Naive thymus-derived CD4-positive, alpha-beta T cell (primary cell): ENCODE measurements at regions of chr2 and their contacts with region 1.

Region 1: GRCh38 chr2:28413142-28413898 is 20.7 kb downstream of the FOSL2 start:
- DNase-seq: no peak
- ATAC-seq: no peak
- H3K4me3 ChIP-seq: no peak overlapping the region
- H3K4me3 Mint-ChIP-seq: no peak overlapping the region
- H3K27ac ChIP-seq: no peak overlapping the region
- H3K27ac Mint-ChIP-seq: peak overlapping the region in 8 of 9 donors; percentile 43 to 96 (median 76)
- H3K4me1 ChIP-seq: peaks cover 28 to 35% of the 10 kb centered on the region in 2 donors
- H3K4me1 Mint-ChIP-seq: peaks cover 23 to 48% (median 39%) of the 10 kb centered on the region in 7 donors
- H3K27me3 ChIP-seq: no peaks in the 10 kb centered on the region
- H3K27me3 Mint-ChIP-seq: no peaks in the 10 kb centered on the region

Region 2: DNA sequence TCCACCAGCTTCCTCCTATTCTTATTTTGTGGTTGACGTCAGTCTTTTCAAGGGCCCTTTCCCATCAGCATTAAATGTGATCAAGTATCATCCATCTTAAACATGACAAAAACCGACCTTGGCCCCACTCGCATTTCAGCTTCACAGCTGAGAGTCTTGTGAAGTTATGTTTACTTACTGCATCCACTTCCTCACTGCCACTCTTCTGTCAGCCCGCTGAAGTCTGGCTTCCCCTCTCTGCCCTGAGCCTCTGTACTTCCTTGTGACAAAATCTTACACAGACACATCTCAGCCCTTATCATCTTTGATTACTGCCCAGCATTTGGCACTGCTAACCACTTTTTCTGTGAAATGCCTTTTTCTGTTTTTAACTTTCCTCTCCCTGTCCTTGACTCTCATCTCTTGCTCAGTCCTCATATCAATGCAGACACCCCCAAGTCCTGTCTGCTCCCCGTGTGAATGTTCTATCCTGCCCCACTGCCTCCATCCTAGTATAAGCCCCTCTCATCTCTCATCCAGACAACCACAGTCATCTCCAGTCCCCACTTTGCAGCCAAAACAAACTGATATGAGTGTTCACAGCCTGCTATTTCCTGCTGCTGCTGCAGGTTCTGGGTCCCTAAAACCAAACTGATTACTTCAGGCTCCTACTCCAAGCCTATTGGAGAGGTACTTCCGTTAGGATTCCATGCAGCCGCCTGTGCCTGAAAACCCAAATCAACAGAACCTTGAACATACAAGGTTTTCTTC is 10.7 kb after region 1 on chr2:
- CTCF ChIA-PET with region 1: interaction called, 4 read pairs
- POLR2A ChIA-PET with region 1: interaction called, 13 read pairs
- intact Hi-C with region 1: loop called (anchors 1 kb)
- DNase-seq: peak in 7 of 9 donors; percentile 33 to 70 (median 57)
- ATAC-seq: peak; percentile 90
- H3K4me3 ChIP-seq: peak overlapping the region; percentile 21
- H3K4me3 Mint-ChIP-seq: peak overlapping the region; percentile 62 to 84 (median 74)
- H3K27ac ChIP-seq: peak overlapping the region; percentile 66
- H3K27ac Mint-ChIP-seq: peak overlapping the region; percentile 88 to 99 (median 97)
- H3K4me1 ChIP-seq: peaks cover 24 to 30% of the 10 kb centered on the region in 2 donors
- H3K4me1 Mint-ChIP-seq: peaks cover 33 to 53% (median 45%) of the 10 kb centered on the region in 7 donors
- H3K27me3 ChIP-seq: no peaks in the 10 kb centered on the region
- H3K27me3 Mint-ChIP-seq: no peaks in the 10 kb centered on the region

Region 3: GRCh38 chr2:28729698-28730097 is 316.4 kb after region 1 on chr2:
- CTCF ChIA-PET with region 1: no interaction called
- POLR2A ChIA-PET with region 1: no interaction called
- intact Hi-C with region 1: no loop called
- DNase-seq: no peak
- ATAC-seq: no peak
- H3K4me3 ChIP-seq: no peak overlapping the region
- H3K4me3 Mint-ChIP-seq: no peak overlapping the region
- H3K27ac ChIP-seq: no peak overlapping the region
- H3K27ac Mint-ChIP-seq: peak overlapping the region in 5 of 9 donors; percentile 5 to 46 (median 26)
- H3K4me1 ChIP-seq: no peaks in the 10 kb centered on the region
- H3K4me1 Mint-ChIP-seq: peaks cover 5 to 17% (median 8%) of the 10 kb centered on the region in 7 donors
- H3K27me3 ChIP-seq: no peaks in the 10 kb centered on the region
- H3K27me3 Mint-ChIP-seq: peaks cover 0 to 3% (median 0%) of the 10 kb centered on the region in 5 donors